ENCODE measurements at regions of chr1 and their contacts with region 1.

Region 1: GRCh38 chr1:66242646-66243547 is 291.1 kb upstream of the SGIP1 start:
- DNase-seq: peak; percentile 55 to 88 (median 68)
- ATAC-seq: peak; percentile 83
- H3K4me3 ChIP-seq: no peak overlapping the region
- H3K4me3 Mint-ChIP-seq: no peak overlapping the region
- H3K27ac ChIP-seq: no peak overlapping the region
- H3K27ac Mint-ChIP-seq: no peak overlapping the region
- H3K4me1 ChIP-seq: peaks cover 37% of the 10 kb centered on the region
- H3K4me1 Mint-ChIP-seq: peaks cover 10% of the 10 kb centered on the region
- H3K27me3 ChIP-seq: no peaks in the 10 kb centered on the region
- H3K27me3 Mint-ChIP-seq: peaks cover 7% of the 10 kb centered on the region
- CTCF ChIP-seq: peak; percentile 99

Region 2: DNA sequence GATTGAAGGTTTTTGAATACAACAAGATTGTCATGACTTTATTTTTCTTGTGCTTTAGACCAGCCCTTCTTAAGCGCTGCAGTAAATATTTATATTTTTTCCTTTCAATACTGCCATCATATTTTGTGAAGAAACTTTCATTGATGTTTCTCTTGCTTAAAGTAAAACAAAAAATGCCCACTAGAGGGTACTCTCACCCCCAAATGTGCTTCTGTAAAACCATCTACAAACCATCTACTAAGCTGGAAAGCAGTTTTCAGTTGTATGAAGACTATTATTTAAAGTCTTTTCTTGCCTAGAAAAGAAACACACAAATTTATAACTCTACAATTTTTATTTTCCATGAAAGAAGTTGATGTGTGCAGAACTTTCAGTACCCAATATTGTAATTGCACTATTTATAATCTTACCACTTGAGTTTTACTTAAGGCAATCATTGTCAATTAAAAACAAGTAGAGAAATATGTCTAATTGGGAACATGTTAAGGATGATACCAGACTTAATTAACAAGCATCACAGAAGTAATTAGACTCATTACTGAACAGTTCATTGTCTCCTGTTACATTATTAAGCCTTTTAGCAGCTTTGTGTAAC is 811.7 kb before region 1 on chr1:
- CTCF ChIA-PET with region 1: no interaction called
- POLR2A ChIA-PET with region 1: no interaction called
- intact Hi-C with region 1: loop called in 1 of 2 experiments (anchors 10 kb)
- DNase-seq: peak in 3 of 14 experiments; percentile 34 to 50 (median 44)
- ATAC-seq: peak; percentile 62
- H3K4me3 ChIP-seq: no peak overlapping the region
- H3K4me3 Mint-ChIP-seq: no peak overlapping the region
- H3K27ac ChIP-seq: no peak overlapping the region
- H3K27ac Mint-ChIP-seq: no peak overlapping the region
- H3K4me1 ChIP-seq: no peaks in the 10 kb centered on the region
- H3K4me1 Mint-ChIP-seq: peaks cover 11% of the 10 kb centered on the region
- H3K27me3 ChIP-seq: no peaks in the 10 kb centered on the region
- H3K27me3 Mint-ChIP-seq: no peaks in the 10 kb centered on the region
- CTCF ChIP-seq: peak; percentile 83

Region 3: GRCh38 chr1:65958561-65959350 is 284.1 kb before region 1 on chr1:
- CTCF ChIA-PET with region 1: interaction called, 36 read pairs
- POLR2A ChIA-PET with region 1: interaction called, 3 read pairs
- intact Hi-C with region 1: loop called (anchors 1 kb)
- DNase-seq: peak in 10 of 14 experiments; percentile 1 to 73 (median 8)
- ATAC-seq: peak; percentile 68
- H3K4me3 ChIP-seq: no peak overlapping the region
- H3K4me3 Mint-ChIP-seq: no peak overlapping the region
- H3K27ac ChIP-seq: no peak overlapping the region
- H3K27ac Mint-ChIP-seq: no peak overlapping the region
- H3K4me1 ChIP-seq: no peaks in the 10 kb centered on the region
- H3K4me1 Mint-ChIP-seq: no peaks in the 10 kb centered on the region
- H3K27me3 ChIP-seq: peaks cover 0 to 5% of the 10 kb centered on the region in 2 experiments
- H3K27me3 Mint-ChIP-seq: no peaks in the 10 kb centered on the region
- CTCF ChIP-seq: peak; percentile 97

Region 4: DNA sequence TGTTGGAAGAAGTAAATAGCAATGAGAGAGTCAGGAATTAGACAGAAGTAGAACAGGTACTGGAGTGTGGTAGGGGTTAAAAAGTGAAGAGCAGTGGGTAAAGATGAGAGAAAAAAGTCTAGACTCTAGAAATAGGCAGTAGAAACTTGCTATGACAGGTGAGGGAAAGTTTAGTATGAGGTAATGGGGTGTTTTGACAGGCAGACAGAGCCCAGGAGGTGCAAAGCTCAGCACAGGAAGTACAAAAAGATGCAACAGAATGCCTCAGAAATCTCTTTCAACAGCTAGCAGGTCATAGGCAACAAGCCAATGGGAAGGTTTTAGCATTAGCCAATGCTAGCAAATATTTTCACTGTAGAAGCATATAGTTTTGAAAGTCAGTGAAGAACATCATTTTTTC is 28.0 kb before region 1 on chr1:
- CTCF ChIA-PET with region 1: interaction called, 5 read pairs
- POLR2A ChIA-PET with region 1: no interaction called
- intact Hi-C with region 1: loop called in 1 of 2 experiments (anchors 2 kb)
- DNase-seq: peak in 6 of 14 experiments; percentile 8 to 74 (median 50)
- ATAC-seq: peak; percentile 94
- H3K4me3 ChIP-seq: no peak overlapping the region
- H3K4me3 Mint-ChIP-seq: no peak overlapping the region
- H3K27ac ChIP-seq: no peak overlapping the region
- H3K27ac Mint-ChIP-seq: peak overlapping the region; percentile 69
- H3K4me1 ChIP-seq: peaks cover 4% of the 10 kb centered on the region
- H3K4me1 Mint-ChIP-seq: peaks cover 10% of the 10 kb centered on the region
- H3K27me3 ChIP-seq: no peaks in the 10 kb centered on the region
- H3K27me3 Mint-ChIP-seq: no peaks in the 10 kb centered on the region
- CTCF ChIP-seq: no peak

Region 5: DNA sequence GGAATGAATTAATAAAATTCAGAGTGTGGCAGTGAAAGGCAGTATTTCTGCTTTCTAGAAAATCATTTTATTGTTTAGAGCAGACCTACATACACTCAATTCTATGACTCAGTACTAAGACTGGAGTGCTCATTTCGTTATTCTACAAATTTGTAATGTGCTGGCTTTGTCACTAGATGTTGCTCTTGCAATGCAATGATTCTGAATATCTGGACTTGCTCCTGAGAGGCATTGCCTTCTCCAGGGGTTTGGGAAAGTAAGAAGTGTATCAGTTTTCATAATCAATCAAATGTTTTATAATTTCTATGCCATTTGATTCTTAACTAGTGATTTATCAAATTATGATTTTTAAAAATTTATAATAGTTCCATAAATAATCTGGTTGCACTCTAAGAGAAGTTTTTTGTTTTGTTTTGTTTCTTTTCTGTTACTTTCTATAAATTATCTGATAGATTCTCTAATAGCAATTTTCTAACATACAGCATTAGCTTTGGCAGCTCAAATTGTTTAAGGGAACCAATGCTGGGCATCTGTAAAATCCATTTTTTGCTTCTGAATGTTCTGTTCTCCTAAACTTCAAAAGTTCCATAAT is 10.5 kb after region 1 on chr1:
- CTCF ChIA-PET with region 1: interaction called, 20 read pairs
- POLR2A ChIA-PET with region 1: interaction called, 3 read pairs
- intact Hi-C with region 1: no loop called
- DNase-seq: peak in 4 of 14 experiments; percentile 30 to 75 (median 69)
- ATAC-seq: peak; percentile 65
- H3K4me3 ChIP-seq: no peak overlapping the region
- H3K4me3 Mint-ChIP-seq: no peak overlapping the region
- H3K27ac ChIP-seq: no peak overlapping the region
- H3K27ac Mint-ChIP-seq: no peak overlapping the region
- H3K4me1 ChIP-seq: peaks cover 3% of the 10 kb centered on the region
- H3K4me1 Mint-ChIP-seq: peaks cover 15% of the 10 kb centered on the region
- H3K27me3 ChIP-seq: no peaks in the 10 kb centered on the region
- H3K27me3 Mint-ChIP-seq: no peaks in the 10 kb centered on the region
- CTCF ChIP-seq: peak; percentile 94

Region 6: GRCh38 chr1:66291047-66291868 is 48.4 kb after region 1 on chr1:
- CTCF ChIA-PET with region 1: no interaction called
- POLR2A ChIA-PET with region 1: no interaction called
- intact Hi-C with region 1: no loop called
- DNase-seq: no peak
- ATAC-seq: no peak
- H3K4me3 ChIP-seq: no peak overlapping the region
- H3K4me3 Mint-ChIP-seq: no peak overlapping the region
- H3K27ac ChIP-seq: no peak overlapping the region
- H3K27ac Mint-ChIP-seq: no peak overlapping the region
- H3K4me1 ChIP-seq: peaks cover 3% of the 10 kb centered on the region
- H3K4me1 Mint-ChIP-seq: peaks cover 36% of the 10 kb centered on the region
- H3K27me3 ChIP-seq: no peaks in the 10 kb centered on the region
- H3K27me3 Mint-ChIP-seq: no peaks in the 10 kb centered on the region
- CTCF ChIP-seq: no peak

Region 7: DNA sequence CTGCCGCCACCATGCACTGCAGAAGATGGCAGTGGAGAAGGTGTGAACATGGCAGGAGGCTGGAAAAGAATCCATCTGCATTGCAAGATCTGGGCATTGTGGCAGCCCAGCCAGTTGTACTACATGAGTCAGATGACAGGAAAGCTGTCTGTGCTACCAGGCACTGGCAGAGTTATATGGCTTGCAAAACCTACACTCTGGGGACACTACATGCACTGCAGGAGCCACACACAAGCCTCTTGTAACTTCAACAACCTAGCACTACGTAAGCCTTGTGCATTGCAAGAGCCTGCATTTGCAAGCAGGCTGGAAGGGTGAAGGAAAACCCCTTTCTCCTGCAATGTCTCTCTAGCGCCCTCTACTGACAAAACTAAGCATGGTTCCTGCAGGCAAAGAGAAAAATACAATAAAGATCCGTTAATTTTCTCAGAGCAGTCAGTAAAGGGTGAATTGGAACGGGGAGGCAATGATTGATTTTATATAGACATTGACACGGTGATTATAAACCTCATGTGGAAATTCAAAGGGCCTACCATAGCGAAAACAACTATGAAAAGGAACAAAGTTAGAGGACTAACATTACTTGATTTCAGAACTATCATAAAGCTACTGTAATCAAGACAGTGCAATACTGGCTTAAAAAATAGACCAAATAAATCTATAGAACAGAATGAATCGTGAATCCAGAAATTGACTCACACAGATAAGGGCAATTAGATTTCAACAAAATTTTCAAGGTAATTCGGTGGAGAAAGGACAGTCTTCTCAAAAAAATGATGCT is 483.2 kb after region 1 on chr1:
- CTCF ChIA-PET with region 1: no interaction called
- POLR2A ChIA-PET with region 1: no interaction called
- intact Hi-C with region 1: loop called (anchors 5 kb)
- DNase-seq: peak in 13 of 14 experiments; percentile 3 to 83 (median 33)
- ATAC-seq: peak; percentile 68
- H3K4me3 ChIP-seq: no peak overlapping the region
- H3K4me3 Mint-ChIP-seq: no peak overlapping the region
- H3K27ac ChIP-seq: no peak overlapping the region
- H3K27ac Mint-ChIP-seq: no peak overlapping the region
- H3K4me1 ChIP-seq: peaks cover 2% of the 10 kb centered on the region
- H3K4me1 Mint-ChIP-seq: peaks cover 19% of the 10 kb centered on the region
- H3K27me3 ChIP-seq: peaks cover 0 to 3% of the 10 kb centered on the region in 2 experiments
- H3K27me3 Mint-ChIP-seq: peaks cover 15% of the 10 kb centered on the region
- CTCF ChIP-seq: peak; percentile 97